Activated naive CD4-positive, alpha-beta T cell treated with anti-CD3 and anti-CD28 coated beads for 36 hours (primary cell): ENCODE measurements at regions of chr19 and their contacts with region 1.

Region 1: DNA sequence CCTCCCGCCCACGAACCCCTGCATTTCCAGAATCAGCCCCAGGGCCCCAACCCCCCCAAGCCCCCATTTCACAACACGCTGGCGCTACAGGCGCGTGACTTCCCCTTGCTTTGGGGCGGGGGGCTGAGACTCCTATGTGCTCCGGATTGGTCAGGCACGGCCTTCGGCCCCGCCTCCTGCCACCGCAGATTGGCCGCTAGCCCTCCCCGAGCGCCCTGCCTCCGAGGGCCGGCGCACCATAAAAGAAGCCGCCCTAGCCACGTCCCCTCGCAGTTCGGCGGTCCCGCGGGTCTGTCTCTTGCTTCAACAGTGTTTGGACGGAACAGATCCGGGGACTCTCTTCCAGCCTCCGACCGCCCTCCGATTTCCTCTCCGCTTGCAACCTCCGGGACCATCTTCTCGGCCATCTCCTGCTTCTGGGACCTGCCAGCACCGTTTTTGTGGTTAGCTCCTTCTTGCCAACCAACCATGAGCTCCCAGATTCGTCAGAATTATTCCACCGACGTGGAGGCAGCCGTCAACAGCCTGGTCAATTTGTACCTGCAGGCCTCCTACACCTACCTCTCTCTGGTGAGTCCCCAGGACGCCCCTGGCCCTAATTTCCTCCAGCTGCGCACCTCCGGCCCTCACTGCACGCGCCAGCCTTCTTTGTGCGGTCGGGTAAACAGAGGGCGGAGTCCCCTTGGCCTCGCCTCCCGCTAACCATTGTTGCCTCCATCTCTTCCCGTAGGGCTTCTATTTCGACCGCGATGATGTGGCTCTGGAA is at the start of gene FTL:
- DNase-seq: peak; percentile 93
- H3K4me3 Mint-ChIP-seq: peak within 1 kb of the TSS; percentile 100
- H3K27ac Mint-ChIP-seq: peak within 1 kb of the TSS; percentile 97
- H3K4me1 Mint-ChIP-seq: peaks cover 56% of the 10 kb centered on the region
- H3K27me3 Mint-ChIP-seq: no peaks in the 10 kb centered on the region
- total RNA-seq, gene FTL: 1,093 to 1,120 TPM

Region 2: DNA sequence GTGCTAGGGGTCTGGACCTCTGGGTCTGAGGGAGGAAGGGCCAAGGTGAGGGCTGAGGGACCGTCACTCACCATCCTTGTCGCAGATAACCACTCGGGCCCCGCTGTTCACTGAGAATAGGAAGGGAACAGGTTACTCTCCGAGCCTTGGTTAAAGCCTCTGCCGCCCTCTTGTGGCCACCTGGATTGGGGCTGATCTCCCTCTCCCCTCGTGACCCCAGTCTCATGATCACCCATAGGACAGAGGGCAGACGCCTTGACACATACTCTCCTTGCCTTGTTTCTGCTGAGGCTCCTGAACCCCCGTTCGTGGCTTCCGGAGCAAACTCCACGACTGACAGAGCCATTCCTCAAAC is 129.5 kb before region 1 on chr19:
- CTCF ChIA-PET with region 1: interaction called, 7 read pairs
- intact Hi-C with region 1: loop called (anchors 1 kb)
- DNase-seq: peak; percentile 98
- H3K4me3 Mint-ChIP-seq: peak overlapping the region; percentile 73
- H3K27ac Mint-ChIP-seq: no peak overlapping the region
- H3K4me1 Mint-ChIP-seq: peaks cover 20% of the 10 kb centered on the region
- H3K27me3 Mint-ChIP-seq: peaks cover 2% of the 10 kb centered on the region

Region 3: DNA sequence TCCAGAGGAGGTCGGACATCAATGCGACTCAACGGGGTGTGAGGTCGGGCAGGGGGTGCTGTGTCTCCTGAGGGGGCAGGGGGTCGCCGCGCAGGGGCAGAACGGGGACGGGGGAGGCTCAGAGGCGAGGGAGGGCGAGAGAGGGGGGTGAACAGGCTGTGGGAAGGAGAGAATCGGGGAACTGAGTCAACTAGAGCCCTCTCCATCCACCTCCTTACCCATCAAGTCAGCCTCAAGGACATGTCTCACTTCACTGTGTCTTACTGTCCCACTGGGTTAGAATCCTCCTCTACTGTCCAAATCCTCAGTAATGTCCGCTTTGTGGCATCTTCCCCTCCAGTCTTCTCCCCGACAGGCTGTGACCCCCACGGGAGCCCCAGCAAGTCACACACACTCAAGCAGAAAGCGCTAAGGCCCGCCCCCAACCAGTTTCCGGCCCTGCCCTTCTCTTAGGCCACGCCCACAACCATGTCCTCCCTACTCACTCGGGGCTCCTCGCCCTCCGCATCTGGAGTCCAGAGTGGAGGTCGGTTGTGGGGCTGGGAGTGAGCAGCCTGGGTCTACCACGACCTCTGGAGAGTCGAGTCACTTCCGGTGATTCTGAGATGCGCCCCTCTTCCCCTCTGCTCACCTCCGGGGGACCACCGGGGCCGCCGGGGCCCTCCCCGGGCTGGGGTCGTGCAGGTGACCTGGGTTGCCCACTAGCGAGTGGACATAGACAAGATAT is 106.1 kb before region 1 on chr19:
- CTCF ChIA-PET with region 1: no interaction called
- intact Hi-C with region 1: loop called (anchors 5 kb)
- DNase-seq: peak; percentile 93
- H3K4me3 Mint-ChIP-seq: peak overlapping the region; percentile 95
- H3K27ac Mint-ChIP-seq: peak overlapping the region; percentile 85
- H3K4me1 Mint-ChIP-seq: peaks cover 4% of the 10 kb centered on the region
- H3K27me3 Mint-ChIP-seq: no peaks in the 10 kb centered on the region

Region 4: GRCh38 chr19:48899781-48900476 is 65.3 kb before region 1 on chr19 and contains the start of gene NUCB1:
- CTCF ChIA-PET with region 1: interaction called, 6 read pairs
- intact Hi-C with region 1: loop called (anchors 1 kb)
- DNase-seq: peak; percentile 100
- H3K4me3 Mint-ChIP-seq: peak within 1 kb of the TSS; percentile 97
- H3K27ac Mint-ChIP-seq: peak within 1 kb of the TSS; percentile 96
- H3K4me1 Mint-ChIP-seq: peaks cover 38% of the 10 kb centered on the region
- H3K27me3 Mint-ChIP-seq: peaks cover 5% of the 10 kb centered on the region
- total RNA-seq, gene NUCB1: 172 to 182 TPM

Region 5: GRCh38 chr19:48918801-48919247 is 46.4 kb before region 1 on chr19:
- CTCF ChIA-PET with region 1: no interaction called
- intact Hi-C with region 1: no loop called
- DNase-seq: peak; percentile 40
- H3K4me3 Mint-ChIP-seq: no peak overlapping the region
- H3K27ac Mint-ChIP-seq: no peak overlapping the region
- H3K4me1 Mint-ChIP-seq: no peaks in the 10 kb centered on the region
- H3K27me3 Mint-ChIP-seq: no peaks in the 10 kb centered on the region

Region 6: DNA sequence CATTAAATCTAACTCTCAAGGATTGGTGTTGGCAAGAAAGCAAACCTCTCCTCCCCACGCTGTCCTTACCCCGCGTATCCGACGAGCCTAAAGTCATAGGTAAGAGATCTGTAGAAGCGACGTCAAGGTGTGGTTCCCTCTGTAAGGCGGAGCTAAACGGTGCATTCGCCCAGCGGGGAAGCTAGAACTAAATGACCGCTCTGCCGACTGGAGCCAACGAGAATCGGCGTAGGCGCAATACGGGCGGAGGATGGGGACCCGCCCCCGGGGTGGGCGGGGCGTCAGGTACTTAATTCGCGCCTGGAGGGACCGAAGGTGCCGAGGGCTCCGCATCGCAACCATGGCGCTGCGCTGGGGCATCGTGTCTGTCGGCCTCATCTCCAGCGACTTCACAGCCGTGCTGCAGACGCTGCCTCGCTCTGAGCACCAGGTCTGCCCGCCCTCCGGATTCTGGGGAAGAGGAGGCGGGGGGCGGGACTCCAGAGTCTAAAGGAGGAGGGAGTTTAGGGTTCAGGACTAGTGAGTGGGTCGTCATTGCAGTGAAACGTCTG is 31.8 kb before region 1 on chr19 and contains the start of gene DHDH:
- CTCF ChIA-PET with region 1: interaction called, 6 read pairs
- intact Hi-C with region 1: loop called (anchors 1 kb)
- DNase-seq: peak; percentile 91
- H3K4me3 Mint-ChIP-seq: peak within 1 kb of the TSS; percentile 83
- H3K27ac Mint-ChIP-seq: peak within 1 kb of the TSS; percentile 4
- H3K4me1 Mint-ChIP-seq: peaks cover 7% of the 10 kb centered on the region
- H3K27me3 Mint-ChIP-seq: no peaks in the 10 kb centered on the region
- total RNA-seq, gene DHDH: 4.2 to 4.5 TPM

Region 7: GRCh38 chr19:48954595-48955310 is 10.5 kb before region 1 on chr19 and contains the start of gene BAX:
- CTCF ChIA-PET with region 1: interaction called, 13 read pairs
- intact Hi-C with region 1: loop called (anchors 1 kb)
- DNase-seq: peak; percentile 98
- H3K4me3 Mint-ChIP-seq: peak within 1 kb of the TSS; percentile 77
- H3K27ac Mint-ChIP-seq: peak within 1 kb of the TSS; percentile 89
- H3K4me1 Mint-ChIP-seq: peaks cover 29% of the 10 kb centered on the region
- H3K27me3 Mint-ChIP-seq: no peaks in the 10 kb centered on the region
- total RNA-seq, gene BAX: 267 to 302 TPM

Region 8: GRCh38 chr19:48975947-48976847 is 11.0 kb after region 1 on chr19:
- CTCF ChIA-PET with region 1: interaction called, 11 read pairs
- intact Hi-C with region 1: no loop called
- DNase-seq: peak; percentile 48
- H3K4me3 Mint-ChIP-seq: no peak overlapping the region
- H3K27ac Mint-ChIP-seq: no peak overlapping the region
- H3K4me1 Mint-ChIP-seq: peaks cover 3% of the 10 kb centered on the region
- H3K27me3 Mint-ChIP-seq: no peaks in the 10 kb centered on the region

Region 9: GRCh38 chr19:49017666-49018351 is 52.6 kb after region 1 on chr19:
- CTCF ChIA-PET with region 1: no interaction called
- intact Hi-C with region 1: no loop called
- DNase-seq: peak; percentile 64
- H3K4me3 Mint-ChIP-seq: peak overlapping the region; percentile 74
- H3K27ac Mint-ChIP-seq: no peak overlapping the region
- H3K4me1 Mint-ChIP-seq: peaks cover 27% of the 10 kb centered on the region
- H3K27me3 Mint-ChIP-seq: peaks cover 8% of the 10 kb centered on the region

Region 10: DNA sequence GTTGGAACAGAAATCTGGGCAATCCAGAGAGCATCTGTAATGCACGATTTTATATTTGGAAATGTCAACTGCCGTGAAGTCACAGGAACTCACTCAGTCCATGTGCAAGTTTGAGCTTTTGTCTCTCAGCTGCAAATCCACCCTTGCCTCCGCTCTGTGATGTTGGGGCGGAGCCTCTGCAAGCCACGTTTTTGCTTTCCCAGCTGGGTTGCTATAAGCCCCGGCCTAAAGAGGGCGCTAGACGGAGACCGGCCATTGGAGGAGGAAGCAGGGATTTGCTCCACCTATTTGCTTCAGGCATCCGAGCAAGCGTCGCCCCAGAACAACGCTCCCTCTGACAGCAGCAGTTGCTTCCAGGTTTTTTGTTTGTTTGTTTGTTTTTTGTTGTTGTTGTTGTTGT is 248.6 kb after region 1 on chr19:
- CTCF ChIA-PET with region 1: no interaction called
- intact Hi-C with region 1: no loop called
- DNase-seq: no peak
- H3K4me3 Mint-ChIP-seq: no peak overlapping the region
- H3K27ac Mint-ChIP-seq: no peak overlapping the region
- H3K4me1 Mint-ChIP-seq: peaks cover 3% of the 10 kb centered on the region
- H3K27me3 Mint-ChIP-seq: peaks cover 2% of the 10 kb centered on the region